A549 (cell line): ENCODE measurements at regions of chr2 and their contacts with region 1.

Region 1: DNA sequence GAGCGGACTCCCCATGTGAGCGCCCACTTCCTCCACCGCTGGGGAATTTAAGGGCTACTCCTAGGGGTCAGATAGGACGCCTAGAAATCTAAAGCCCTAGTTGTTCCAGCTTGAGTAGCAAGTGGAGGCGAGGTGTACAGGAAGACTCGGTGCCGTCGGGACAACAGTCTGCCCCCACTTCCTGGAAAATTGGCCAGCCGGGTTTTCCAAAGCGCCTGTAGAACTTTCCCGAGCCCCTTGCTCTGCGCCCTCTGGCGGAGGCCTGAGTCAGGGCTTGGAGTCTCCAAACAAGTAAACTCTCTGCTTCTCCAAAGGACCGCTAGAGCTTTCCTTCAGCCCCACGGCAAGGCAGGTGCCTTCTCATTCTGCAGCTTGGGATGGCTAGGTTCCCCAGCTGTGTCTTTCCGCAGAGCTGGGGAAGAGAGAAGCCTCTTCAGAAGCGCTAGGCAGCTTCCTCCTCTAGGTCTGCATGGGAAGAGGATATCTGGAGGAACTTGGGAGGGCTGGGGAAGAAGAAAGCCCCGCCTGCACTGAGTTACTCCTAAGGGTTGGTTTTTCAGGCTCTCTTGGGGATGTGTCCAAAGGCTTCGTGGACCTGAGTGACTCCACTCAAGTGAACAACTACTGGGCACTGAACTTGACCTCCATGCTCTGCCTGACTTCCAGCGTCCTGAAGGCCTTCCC is 688 bp downstream of the SPR start:
- DNase-seq: peak; percentile 85 to 93
- ATAC-seq: peak; percentile 70 to 79
- H3K4me3 ChIP-seq: peak overlapping the region; percentile 77
- H3K27ac ChIP-seq: peak overlapping the region; percentile 92 to 96
- H3K4me1 ChIP-seq: peaks cover 22% of the 10 kb centered on the region
- CTCF ChIP-seq: peak; percentile 96
- EP300 ChIP-seq: no peak
- POLR2A ChIP-seq: peak; percentile 38; the same call in 1 of the 2 replicates
- RAD21 ChIP-seq: peak; percentile 56 to 75

Region 2: DNA sequence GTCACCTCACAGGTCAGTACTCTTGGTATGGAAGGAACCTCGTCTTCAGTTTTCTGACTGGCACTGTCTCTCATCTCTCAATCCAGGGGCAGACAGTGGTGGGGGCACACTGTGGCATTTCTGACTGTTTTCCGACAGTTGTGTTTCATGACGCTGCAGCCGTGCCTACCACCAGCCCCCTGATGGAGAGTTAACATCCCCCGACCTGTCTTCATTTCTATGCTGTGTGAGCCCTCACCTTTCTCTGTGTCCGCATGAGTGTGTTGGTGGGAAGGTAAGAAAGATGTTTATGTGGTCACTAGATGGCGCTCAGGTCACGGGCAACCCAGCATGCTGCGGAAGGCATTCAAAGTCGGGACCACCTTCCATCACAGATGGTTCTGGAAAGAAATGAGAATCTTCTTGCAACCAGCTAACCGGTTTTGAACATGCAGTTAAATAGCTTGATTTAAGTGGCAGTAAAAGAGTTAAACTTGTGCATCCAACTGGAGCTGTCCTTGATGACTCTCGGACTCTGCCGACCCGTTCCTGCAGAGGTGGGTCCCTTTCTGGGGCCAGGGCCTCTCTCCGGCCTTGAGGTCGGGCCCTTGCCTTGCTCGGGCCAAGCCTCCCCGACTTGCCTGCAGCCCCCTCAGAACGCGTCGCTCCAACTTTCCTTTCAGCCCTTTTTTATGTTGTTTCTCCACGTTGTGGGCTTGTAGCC is 1342.2 kb before region 1 on chr2:
- CTCF ChIA-PET with region 1: interaction called, 22 read pairs
- POLR2A ChIA-PET with region 1: no interaction called
- DNase-seq: peak; percentile 78 to 80
- ATAC-seq: peak; percentile 88 to 92
- H3K4me3 ChIP-seq: peak overlapping the region; percentile 16; the same call in 1 of the 3 replicates
- H3K27ac ChIP-seq: no peak overlapping the region
- H3K4me1 ChIP-seq: peaks cover 8% of the 10 kb centered on the region
- CTCF ChIP-seq: peak; percentile 97
- EP300 ChIP-seq: no peak
- POLR2A ChIP-seq: no peak
- RAD21 ChIP-seq: peak; percentile 97 to 99

Region 3: DNA sequence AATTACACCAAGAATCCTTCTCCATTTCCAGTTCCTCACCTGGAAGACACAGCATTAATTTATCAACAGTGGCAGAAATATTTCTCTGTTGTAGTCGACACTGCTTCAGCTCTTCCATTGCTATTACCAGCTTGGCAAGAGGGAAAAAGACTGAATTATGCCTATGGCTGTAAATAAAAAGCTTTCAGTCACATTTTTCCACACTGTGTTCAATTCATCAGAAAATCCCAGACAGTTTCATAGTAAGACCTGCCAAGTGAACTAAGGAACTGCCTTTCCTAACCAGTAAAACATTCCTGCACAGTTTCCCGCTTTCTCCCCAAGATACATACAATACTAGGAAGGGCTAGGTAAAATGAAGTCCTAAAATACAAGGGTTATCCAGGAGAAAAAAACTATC is 156.8 kb before region 1 on chr2:
- CTCF ChIA-PET with region 1: no interaction called
- POLR2A ChIA-PET with region 1: no interaction called
- DNase-seq: no peak
- ATAC-seq: no peak
- H3K4me3 ChIP-seq: no peak overlapping the region
- H3K27ac ChIP-seq: no peak overlapping the region
- H3K4me1 ChIP-seq: 0 out of 3 replicates have a peak, but pooled peaks cover 3% of the 10 kb centered on the region
- CTCF ChIP-seq: no peak
- EP300 ChIP-seq: no peak
- POLR2A ChIP-seq: no peak
- RAD21 ChIP-seq: no peak

Region 4: DNA sequence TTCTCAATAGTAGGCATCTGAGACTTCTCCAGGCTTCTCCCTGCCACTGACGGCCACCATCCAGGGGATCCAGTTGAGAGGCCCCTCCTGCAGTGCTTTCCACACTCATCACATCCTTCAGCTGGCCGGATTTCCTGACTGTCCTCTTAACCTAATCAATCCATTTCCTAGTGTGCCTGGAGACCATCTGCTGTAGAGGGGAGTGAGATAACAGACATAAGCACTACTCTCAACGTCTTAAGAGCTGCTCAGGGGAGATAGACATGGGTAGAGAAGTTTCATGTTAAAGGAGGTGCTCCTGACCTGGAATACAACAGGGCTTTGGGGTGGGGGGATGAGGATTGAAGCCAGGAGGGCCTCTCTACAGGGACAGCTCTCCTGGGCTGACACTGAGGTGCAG is 13.5 kb after region 1 on chr2:
- CTCF ChIA-PET with region 1: interaction called, 58 read pairs
- POLR2A ChIA-PET with region 1: no interaction called
- DNase-seq: no peak
- ATAC-seq: no peak
- H3K4me3 ChIP-seq: no peak overlapping the region
- H3K27ac ChIP-seq: no peak overlapping the region
- H3K4me1 ChIP-seq: peaks cover 4% of the 10 kb centered on the region; the same call in 1 of the 3 replicates
- CTCF ChIP-seq: no peak
- EP300 ChIP-seq: no peak
- POLR2A ChIP-seq: no peak
- RAD21 ChIP-seq: no peak

Region 5: GRCh38 chr2:72940786-72941185 is 52.9 kb after region 1 on chr2:
- CTCF ChIA-PET with region 1: interaction called, 85 read pairs
- POLR2A ChIA-PET with region 1: no interaction called
- DNase-seq: no peak
- ATAC-seq: no peak
- H3K4me3 ChIP-seq: no peak overlapping the region
- H3K27ac ChIP-seq: no peak overlapping the region
- H3K4me1 ChIP-seq: no peaks in the 10 kb centered on the region
- CTCF ChIP-seq: no peak
- EP300 ChIP-seq: no peak
- POLR2A ChIP-seq: no peak
- RAD21 ChIP-seq: no peak

Region 6: DNA sequence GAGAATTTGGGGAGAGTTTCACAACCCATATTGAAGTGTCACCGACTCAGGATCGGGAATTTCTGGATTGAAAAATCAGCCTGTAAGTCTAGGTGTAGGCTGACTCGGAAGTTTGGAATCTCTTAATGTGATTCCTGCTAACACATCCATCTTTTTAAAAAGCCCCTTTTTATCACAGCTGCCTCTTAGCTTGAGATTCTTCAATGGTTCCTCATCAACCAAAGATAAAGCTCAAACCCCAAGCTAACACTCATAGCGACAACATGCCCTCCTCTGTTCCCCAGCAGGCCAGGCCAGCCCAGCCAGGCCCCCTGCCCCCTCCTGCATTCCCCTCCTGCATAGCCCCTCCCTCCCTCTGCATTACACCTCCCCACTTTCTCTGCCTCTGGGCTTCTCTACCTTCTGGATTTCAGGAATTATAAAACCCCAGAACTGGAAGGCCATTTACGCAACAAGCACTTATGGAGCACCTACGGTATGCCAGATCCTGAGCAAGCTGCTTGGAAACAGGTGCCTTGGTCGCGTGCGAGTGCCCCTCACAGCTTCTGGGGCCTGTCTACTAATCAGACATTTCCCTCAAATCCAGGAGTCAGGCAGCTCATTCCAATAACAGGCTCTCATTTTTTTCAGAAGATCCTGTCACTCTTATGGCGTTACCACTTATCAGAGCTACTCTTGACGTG is 92.8 kb after region 1 on chr2:
- CTCF ChIA-PET with region 1: interaction called, 208 read pairs
- POLR2A ChIA-PET with region 1: no interaction called
- DNase-seq: no peak
- ATAC-seq: peak in 1 of 2 experiments; percentile 17; a peak in 1 of 6 replicates
- H3K4me3 ChIP-seq: no peak overlapping the region
- H3K27ac ChIP-seq: no peak overlapping the region
- H3K4me1 ChIP-seq: peaks cover 7% of the 10 kb centered on the region; the same call in 1 of the 3 replicates
- CTCF ChIP-seq: no peak
- EP300 ChIP-seq: no peak
- POLR2A ChIP-seq: no peak
- RAD21 ChIP-seq: no peak

Region 7: DNA sequence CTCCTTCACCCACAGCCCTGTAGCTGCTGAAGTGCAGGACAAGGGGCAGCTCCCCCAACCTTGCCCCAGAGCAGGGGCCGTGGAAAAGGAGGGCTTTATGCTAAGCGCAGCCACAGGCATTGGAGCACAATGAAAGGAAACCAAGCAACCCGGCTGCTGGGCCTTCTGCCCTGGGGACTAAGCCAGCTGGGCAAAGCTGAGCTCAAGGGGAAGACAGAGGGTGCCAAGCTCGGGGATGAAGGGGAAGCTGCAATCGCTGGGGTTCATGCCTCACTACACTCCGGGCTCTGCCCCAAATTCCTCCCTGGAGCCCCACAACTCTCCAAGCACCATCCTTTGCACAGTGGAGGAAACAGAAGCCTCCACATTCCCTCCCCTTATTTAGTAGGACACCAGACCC is 171.2 kb after region 1 on chr2:
- CTCF ChIA-PET with region 1: interaction called, 11 read pairs
- POLR2A ChIA-PET with region 1: no interaction called
- DNase-seq: no peak
- ATAC-seq: no peak
- H3K4me3 ChIP-seq: no peak overlapping the region
- H3K27ac ChIP-seq: no peak overlapping the region
- H3K4me1 ChIP-seq: peaks cover 18% of the 10 kb centered on the region
- CTCF ChIP-seq: no peak
- EP300 ChIP-seq: no peak
- POLR2A ChIP-seq: no peak
- RAD21 ChIP-seq: no peak

Region 8: DNA sequence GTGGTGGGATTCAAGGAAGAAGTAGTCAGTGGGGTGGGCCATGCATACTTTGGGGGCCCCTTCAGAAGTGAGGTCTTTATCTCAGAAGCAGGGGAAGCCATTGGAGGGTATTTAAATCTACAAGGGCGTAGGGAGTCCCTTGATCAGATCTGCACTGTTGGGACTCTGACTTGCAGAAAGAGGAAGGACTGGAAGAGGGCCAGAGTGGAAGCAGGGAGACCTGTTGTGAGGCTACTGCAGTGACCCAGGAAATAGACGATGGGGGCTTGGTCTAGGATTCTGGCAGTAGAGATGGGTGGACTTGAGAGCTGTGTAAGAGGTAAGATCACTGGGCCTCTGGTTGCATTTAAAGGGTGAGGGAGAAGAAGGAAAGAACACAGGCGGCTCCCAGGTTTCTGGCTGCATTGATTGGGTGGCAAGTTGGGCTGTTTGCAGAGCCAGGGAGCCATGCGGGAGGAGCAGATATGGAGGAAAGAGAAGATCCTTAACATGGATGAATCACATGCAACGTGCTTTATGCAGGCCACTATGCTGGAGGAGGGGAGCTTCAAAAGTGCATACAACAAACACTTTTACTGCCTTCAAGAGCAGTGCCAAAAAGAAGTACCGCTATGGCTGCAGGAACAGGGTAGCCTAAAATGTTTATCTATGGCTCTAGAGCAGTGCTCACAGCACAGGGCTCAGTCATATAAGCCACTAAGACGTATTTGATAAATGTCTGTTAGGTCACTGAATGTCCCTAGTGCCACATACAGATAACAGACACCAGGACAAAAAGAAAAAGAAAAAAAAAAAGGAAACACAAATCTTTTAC is 181.4 kb after region 1 on chr2:
- CTCF ChIA-PET with region 1: no interaction called
- POLR2A ChIA-PET with region 1: no interaction called
- DNase-seq: no peak
- ATAC-seq: no peak
- H3K4me3 ChIP-seq: peak overlapping the region; percentile 79
- H3K27ac ChIP-seq: peak overlapping the region; percentile 87 to 93; a peak in 5 of 6 replicates
- H3K4me1 ChIP-seq: peaks cover 45% of the 10 kb centered on the region
- CTCF ChIP-seq: no peak
- EP300 ChIP-seq: no peak
- POLR2A ChIP-seq: no peak
- RAD21 ChIP-seq: no peak

Region 9: DNA sequence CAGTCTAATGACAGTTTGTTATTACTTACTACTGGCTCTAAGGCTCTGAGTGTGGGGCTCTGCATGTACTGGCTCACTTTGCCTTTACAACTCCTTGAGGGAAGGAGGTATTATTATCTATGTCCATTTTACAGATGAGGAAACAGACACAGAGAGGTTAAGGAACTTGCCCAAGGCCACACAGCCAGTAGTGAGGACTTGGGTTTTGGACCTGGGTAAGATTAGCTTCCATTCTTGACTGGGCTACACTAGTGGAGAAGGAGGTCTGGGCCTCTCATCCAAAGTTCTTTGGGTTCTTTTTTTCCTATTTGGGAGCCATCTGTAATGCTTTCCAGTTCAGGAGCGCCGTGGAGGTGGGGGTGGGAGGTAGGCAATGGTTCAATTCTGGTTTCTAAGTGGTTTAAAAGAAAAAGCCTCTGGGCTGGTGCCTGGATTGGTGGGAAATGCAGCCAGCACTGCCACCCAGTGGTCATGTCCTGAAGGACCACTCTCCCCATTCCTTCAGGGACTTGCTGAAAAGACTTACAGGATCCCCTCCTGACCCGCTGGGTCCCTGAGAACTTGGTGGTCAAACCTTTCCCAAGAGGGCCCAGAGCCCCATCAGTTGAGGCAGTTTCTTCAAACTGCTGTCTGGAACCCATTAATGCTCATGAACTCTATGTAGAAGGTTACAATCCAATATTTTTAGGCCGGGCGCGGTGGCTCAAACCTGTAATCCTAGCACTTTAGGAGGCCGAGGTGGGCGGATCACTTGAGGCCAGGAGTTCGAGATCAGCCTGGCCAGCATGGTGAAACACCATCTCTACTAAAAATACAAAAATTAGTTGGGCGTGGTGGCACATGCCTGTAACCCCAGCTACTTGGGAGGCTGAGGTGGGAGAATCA is 275.8 kb after region 1 on chr2:
- CTCF ChIA-PET with region 1: interaction called, 260 read pairs
- POLR2A ChIA-PET with region 1: no interaction called
- DNase-seq: peak; percentile 82 to 88
- ATAC-seq: peak; percentile 94 to 99
- H3K4me3 ChIP-seq: no peak overlapping the region
- H3K27ac ChIP-seq: no peak overlapping the region
- H3K4me1 ChIP-seq: no peaks in the 10 kb centered on the region
- CTCF ChIP-seq: peak; percentile 96
- EP300 ChIP-seq: no peak
- POLR2A ChIP-seq: no peak
- RAD21 ChIP-seq: peak; percentile 95 to 96